B cell (primary cell): ENCODE measurements at regions of chrX and their contacts with region 1.

Region 1: GRCh38 chrX:118736394-118737010 is 9.1 kb downstream of the IL13RA1 start:
- DNase-seq: peak; percentile 36
- ATAC-seq: peak; percentile 71
- H3K4me3 ChIP-seq: no peak overlapping the region
- H3K4me3 Mint-ChIP-seq: peak overlapping the region; percentile 66
- H3K27ac ChIP-seq: peak overlapping the region in 1 of 2 donors; percentile 76
- H3K27ac Mint-ChIP-seq: peak overlapping the region; percentile 88
- H3K4me1 ChIP-seq: peaks cover 9 to 14% of the 10 kb centered on the region in 2 donors
- H3K4me1 Mint-ChIP-seq: peaks cover 22% of the 10 kb centered on the region
- H3K27me3 ChIP-seq: no peaks in the 10 kb centered on the region
- H3K27me3 Mint-ChIP-seq: no peaks in the 10 kb centered on the region
- CTCF ChIP-seq: no peak

Region 2: GRCh38 chrX:118682258-118683014 is 54.1 kb before region 1 on chrX:
- CTCF ChIA-PET with region 1: no interaction called
- POLR2A ChIA-PET with region 1: no interaction called
- intact Hi-C with region 1: loop called (anchors 10 kb)
- DNase-seq: no peak
- ATAC-seq: no peak
- H3K4me3 ChIP-seq: no peak overlapping the region
- H3K4me3 Mint-ChIP-seq: no peak overlapping the region
- H3K27ac ChIP-seq: no peak overlapping the region
- H3K27ac Mint-ChIP-seq: no peak overlapping the region
- H3K4me1 ChIP-seq: no peaks in the 10 kb centered on the region
- H3K4me1 Mint-ChIP-seq: peaks cover 6% of the 10 kb centered on the region
- H3K27me3 ChIP-seq: no peaks in the 10 kb centered on the region
- H3K27me3 Mint-ChIP-seq: no peaks in the 10 kb centered on the region
- CTCF ChIP-seq: no peak

Region 3: DNA sequence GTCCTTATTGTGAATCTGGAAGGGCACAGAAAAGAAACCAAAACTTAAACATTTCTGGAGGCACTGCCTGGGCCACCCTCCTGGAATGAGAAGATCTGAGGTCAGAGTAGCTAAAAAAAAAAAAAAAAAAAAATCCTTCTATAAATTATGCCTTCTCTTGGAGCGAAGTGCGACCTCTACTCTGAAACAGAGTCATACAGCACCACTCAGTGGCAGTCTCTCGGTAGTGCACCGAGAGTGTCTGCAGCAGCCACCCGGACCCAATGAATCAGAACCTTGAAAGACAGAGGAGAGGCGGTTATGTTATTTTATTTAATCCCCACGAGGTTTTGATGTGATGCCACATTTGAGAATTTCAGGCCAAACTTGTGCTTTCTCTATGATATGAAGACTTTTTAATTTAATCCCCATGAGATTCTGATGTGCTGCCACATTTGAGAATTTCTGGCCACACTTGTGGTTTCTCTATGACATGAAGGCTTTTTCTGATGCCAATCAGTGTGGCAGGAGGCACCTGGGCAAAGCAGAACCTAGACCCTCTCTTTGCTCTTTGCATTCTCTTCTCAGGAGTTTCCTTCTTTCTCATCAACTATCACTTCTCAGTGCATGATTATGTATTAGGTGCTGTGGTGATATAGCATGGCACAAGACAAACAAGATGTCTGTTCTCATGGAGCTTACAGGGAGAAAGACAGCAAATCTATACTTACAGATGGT is 330.7 kb after region 1 on chrX:
- CTCF ChIA-PET with region 1: no interaction called
- POLR2A ChIA-PET with region 1: no interaction called
- intact Hi-C with region 1: no loop called
- DNase-seq: peak; percentile 66
- ATAC-seq: peak; percentile 84
- H3K4me3 ChIP-seq: no peak overlapping the region
- H3K4me3 Mint-ChIP-seq: no peak overlapping the region
- H3K27ac ChIP-seq: no peak overlapping the region
- H3K27ac Mint-ChIP-seq: no peak overlapping the region
- H3K4me1 ChIP-seq: peaks cover 11 to 21% of the 10 kb centered on the region in 2 donors
- H3K4me1 Mint-ChIP-seq: peaks cover 14% of the 10 kb centered on the region
- H3K27me3 ChIP-seq: no peaks in the 10 kb centered on the region
- H3K27me3 Mint-ChIP-seq: no peaks in the 10 kb centered on the region
- CTCF ChIP-seq: peak; percentile 63